Cardiac septum (tissue), 1 donor: ENCODE measurements at regions of chr12 and their contacts with region 1.

Region 1: DNA sequence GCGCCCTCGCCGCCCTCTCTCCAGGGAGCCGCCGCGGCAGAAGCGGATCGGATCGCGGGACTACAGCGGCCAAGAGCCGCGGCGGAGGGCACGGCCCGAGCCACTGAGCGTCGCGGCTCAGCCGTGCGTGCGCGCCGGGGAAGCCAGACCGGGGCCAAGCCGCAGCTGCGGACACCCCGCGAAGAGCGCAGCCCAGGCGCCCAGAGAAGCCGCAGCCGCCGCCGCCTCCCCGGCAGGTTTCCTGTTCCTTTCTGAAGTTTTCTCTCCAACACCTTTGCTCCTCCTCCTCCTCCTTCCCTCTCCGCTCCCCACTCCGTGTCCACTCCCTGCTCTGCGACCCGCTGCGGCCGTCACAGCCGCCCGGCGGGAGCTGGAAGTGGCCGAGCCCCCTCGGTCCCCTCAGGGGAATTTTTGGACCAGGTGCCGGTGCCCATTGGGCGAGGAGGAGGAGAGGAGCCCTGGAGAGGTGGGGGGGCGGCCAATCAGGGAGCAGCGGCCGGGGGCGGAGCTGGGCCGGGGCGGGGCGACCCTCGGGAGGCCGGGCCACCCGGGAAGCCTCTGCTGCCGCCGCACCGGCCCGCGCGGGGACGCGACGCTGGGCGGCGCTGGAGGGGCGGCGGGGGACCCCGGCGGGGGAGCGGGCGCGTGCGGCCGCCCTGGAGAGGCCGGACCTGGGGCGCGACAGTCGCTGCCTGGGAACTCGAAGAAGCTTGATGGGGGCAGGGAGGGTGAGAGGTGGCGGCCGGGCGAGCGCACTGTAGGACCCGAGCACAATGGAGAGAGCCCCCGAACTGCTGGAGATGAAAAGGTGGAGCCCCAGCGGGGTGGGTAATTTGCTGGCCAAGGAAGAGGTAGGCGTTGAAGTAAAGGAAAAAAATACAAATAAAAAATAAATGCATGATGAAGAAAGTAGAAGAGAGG is at the start of gene ITPR2:
- DNase-seq: peak; percentile 97
- total RNA-seq, gene ITPR2: 20.9 TPM

Region 2: DNA sequence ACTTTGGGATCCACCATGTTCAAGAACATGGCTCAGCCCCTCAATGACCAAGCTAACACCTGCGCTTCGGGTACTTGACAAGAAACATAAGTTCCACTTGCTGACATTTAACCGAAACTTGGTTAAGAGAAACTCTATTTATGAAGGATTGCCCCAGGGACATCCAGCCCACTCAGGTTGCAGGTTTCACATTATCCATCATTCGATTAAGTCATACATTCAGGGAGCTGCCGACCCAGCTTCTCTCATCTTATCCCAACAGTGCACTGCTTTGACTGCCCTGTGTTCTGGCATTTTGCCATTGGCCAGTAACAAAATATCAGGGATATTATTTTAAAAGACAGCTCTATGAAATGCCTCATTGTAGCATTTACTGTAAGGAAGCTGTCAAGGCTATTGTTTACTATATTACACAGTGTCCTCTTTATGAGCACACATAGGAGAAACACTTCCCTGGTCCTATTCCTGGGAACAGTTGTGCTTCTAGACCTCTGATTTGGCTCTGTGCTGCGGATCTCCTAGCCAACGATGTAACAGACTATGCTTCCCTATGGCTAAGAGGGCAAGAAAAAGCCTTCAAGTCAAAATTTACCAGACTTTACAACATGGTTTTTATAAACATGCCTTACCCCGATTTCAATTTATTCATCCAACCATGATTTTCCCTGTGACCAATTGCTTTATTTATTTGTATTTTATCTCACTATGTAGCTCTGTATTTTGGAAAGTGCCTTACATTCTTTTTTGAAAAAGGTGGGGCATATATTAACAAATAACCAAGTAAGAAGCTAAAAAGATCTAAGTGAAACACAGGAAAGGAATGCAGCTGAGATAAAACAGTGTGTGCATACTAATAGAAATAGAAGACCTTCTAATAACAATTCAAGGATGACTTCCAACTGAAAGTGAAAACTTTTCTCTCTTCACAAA is 109.4 kb before region 1 on chr12:
- intact Hi-C with region 1: loop called (anchors 10 kb)
- DNase-seq: no peak

Region 3: DNA sequence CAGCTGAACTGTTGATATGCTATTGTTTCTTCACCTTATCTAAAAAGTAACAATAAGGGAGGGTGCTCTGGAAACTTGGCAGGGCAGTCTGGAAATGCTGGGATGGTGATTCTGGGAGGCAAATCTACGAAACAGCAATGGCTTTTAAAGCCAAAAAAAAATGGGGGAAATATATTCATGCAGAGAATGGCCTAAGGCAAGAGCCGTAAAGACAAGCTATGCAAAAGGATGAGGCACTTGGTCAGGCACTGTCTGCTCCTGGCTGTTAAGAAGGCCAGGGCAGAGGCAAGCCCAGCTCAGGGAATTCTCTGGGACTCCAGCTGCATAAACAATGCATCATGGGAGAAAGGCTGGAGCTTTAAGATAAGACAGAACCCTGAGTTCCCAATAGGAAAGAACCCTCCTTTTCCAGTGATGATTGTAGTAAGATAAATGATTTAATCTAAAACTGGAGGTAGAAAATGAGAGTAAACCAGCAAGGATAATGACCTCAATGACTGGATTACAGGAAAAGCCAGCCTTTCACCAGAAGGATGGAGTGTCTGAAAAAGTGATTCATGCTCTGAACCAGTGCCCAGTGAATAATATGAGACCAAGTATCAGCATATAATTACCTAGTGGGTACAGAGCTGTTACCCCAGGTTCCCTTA is 46.1 kb before region 1 on chr12:
- intact Hi-C with region 1: loop called (anchors 2 kb)
- DNase-seq: no peak